ENCODE measurements at regions of chr3 and their contacts with region 1.

Region 1: DNA sequence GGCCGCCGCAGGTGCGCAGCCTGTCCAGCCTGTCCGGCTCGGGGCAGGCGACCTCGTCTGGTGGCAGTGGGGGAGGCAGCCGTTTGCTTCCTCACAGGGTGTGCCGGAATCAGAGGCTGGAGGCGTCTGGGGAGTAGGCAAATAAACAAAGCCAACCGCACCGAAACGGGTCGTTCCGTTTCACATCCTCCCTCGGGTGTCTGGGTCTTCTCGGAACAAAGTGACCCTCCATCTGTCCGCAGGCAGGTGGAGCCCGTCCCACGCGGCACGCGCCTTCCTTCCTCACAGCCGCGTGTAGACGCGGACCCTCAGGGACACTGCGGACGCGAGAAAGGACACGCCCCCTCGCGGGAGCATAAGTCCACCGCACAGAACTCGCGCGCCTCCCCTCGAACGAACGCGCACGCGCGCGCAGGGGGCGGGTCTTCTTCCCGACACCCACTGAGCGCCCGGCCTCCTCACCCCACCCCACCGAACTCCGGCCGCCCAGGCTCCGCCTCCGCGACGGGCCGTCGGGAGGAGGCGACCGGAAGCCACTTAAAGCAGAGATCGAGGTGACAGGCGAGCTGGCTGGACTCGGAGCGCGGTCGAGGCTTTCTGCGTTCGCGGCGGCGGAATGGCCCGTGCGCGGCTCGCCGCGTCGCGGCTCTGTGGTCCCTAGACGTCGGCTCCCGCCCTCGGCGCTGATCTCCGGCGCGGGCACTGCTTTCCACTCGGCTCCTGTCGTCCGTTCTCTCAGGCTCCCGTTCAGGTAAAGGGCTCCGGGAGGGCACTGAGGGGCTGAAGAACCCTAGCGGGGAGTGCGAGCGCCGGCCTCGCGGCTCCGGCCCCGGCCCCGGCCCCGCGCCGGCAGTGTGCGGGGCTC is at the start of gene TIPARP:
- DNase-seq: peak; percentile 97
- H3K4me3 Mint-ChIP-seq: peak within 1 kb of the TSS; percentile 93
- H3K27ac Mint-ChIP-seq: peak within 1 kb of the TSS; percentile 88
- H3K4me1 Mint-ChIP-seq: peaks cover 40% of the 10 kb centered on the region
- H3K27me3 Mint-ChIP-seq: no peaks in the 10 kb centered on the region
- total RNA-seq, gene TIPARP: 15.7 to 17.1 TPM

Region 2: DNA sequence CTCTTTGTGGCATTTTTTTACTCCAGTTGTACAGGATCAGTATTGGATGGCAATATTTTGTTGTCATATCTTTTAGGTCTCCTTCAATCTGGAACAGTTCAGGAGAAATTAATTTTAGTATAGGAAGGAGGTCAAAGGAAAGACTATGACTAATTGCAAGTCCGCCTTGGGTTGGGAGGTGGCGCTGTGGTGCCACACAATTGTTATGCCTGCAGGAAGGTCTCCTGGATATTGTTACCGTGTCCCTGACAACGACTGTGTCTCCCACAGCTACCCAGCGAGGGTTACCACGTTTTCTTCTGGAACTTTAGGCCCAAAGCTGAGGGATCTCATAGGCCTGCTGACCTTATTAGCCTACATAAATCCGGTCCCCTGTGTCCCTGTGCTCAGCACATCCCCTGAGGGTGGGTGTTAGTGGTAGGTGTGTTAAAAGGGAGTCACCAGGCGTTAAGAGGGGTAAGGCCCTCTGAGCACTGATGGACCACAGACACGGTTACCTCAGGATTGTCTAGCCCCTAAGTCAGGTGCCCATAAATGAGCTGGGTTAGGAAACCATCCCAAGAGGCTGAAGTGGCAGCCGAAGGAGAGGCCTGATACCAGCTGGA is 522.4 kb before region 1 on chr3:
- CTCF ChIA-PET with region 1: no interaction called
- intact Hi-C with region 1: loop called (anchors 2 kb)
- DNase-seq: peak; percentile 77
- H3K4me3 Mint-ChIP-seq: no peak overlapping the region
- H3K27ac Mint-ChIP-seq: no peak overlapping the region
- H3K4me1 Mint-ChIP-seq: peaks cover 3% of the 10 kb centered on the region
- H3K27me3 Mint-ChIP-seq: no peaks in the 10 kb centered on the region

Region 3: DNA sequence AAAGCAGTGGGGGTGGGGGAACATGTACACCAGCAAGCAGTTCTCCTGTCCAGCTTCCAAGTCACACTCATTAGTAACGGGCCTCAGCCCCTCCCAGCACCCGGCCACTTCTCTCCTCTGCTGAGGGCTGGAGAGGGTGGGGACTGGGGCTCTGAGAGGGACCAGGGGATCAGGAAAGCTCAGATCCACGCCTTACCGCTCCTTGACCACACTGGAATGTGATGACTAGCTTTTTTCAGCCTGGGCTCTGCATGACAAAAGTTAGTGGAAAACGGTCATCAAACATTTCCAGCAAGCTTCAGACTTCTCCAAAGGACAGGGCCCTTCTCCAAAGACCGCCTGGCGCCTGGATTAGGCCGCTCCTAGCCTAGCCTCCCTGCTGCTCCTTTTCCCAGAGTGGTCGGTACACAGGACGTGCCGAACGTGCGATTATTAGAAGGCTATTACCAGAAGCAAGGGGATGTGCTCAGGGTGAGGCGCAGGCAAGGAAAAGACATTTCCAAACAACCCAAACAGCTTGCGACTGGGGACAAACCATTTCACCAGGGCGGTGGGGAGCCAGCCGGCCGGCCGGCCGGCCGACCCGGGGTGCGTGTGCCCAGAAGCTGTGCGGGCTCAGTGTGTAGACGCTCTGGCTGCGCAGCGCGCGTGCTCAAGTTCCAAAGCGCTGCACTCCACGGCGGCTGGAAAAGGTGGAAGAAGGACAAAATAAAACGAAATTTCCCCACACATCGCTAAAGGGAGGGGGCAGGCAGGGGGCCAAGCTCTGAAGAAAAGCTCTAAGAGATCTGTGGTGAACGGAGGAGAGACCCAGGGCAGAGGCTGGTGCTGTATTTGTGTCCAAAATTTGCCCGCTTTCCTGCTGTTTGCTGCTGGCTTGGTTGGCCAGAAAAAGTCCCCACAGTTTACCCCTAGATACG is 68.3 kb before region 1 on chr3:
- CTCF ChIA-PET with region 1: no interaction called
- intact Hi-C with region 1: loop called (anchors 1 kb)
- DNase-seq: no peak
- H3K4me3 Mint-ChIP-seq: peak overlapping the region; percentile 68
- H3K27ac Mint-ChIP-seq: no peak overlapping the region
- H3K4me1 Mint-ChIP-seq: peaks cover 19% of the 10 kb centered on the region
- H3K27me3 Mint-ChIP-seq: peaks cover 31% of the 10 kb centered on the region

Region 4: DNA sequence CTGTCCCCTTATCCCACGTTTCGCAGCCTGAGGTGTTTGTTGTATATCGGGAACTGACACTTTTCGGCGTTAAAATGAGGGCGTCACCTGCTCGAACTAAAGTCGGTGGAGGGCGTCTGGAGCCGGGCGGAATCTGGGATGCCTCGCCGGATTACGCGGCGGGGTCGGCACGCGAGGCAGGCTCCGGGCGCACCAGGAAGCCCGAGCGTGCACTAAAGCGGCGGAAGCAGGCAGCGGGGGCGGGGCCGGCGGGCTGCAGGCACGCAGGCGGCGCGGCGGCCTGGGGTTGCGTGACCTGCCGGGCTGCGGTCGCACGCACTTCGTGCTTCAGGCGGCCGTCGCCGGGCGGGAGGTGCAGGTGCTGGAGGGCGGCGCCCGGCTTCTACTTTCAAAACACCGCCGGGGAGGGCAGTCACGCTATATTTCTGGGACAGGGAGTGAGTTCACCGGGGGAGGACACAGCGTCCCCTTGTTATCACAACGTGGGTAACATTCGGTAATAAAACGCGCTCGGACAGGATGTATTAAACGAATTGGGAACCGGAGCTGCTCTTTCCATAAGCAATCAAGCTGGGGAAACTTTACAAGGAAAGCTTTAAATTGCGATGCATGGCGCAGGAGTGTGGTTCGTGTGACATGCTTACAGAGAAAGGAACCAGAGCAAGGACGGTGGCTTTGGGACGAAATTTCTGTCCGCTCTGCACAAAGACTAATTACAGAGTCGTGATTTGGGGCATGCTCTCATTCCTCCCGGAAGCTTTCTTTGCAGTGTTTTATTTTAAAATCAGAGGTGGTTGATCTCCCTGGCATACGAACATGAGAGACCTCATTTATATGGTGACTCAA is 142.7 kb after region 1 on chr3:
- CTCF ChIA-PET with region 1: interaction called, 4 read pairs
- intact Hi-C with region 1: loop called (anchors 1 kb)
- DNase-seq: peak; percentile 90
- H3K4me3 Mint-ChIP-seq: peak overlapping the region; percentile 90
- H3K27ac Mint-ChIP-seq: peak overlapping the region; percentile 88
- H3K4me1 Mint-ChIP-seq: peaks cover 22% of the 10 kb centered on the region
- H3K27me3 Mint-ChIP-seq: no peaks in the 10 kb centered on the region

Region 5: GRCh38 chr3:157045238-157045850 is 371.1 kb after region 1 on chr3:
- CTCF ChIA-PET with region 1: no interaction called
- intact Hi-C with region 1: no loop called
- DNase-seq: no peak
- H3K4me3 Mint-ChIP-seq: no peak overlapping the region
- H3K27ac Mint-ChIP-seq: no peak overlapping the region
- H3K4me1 Mint-ChIP-seq: no peaks in the 10 kb centered on the region
- H3K27me3 Mint-ChIP-seq: peaks cover 6% of the 10 kb centered on the region

Region 6: DNA sequence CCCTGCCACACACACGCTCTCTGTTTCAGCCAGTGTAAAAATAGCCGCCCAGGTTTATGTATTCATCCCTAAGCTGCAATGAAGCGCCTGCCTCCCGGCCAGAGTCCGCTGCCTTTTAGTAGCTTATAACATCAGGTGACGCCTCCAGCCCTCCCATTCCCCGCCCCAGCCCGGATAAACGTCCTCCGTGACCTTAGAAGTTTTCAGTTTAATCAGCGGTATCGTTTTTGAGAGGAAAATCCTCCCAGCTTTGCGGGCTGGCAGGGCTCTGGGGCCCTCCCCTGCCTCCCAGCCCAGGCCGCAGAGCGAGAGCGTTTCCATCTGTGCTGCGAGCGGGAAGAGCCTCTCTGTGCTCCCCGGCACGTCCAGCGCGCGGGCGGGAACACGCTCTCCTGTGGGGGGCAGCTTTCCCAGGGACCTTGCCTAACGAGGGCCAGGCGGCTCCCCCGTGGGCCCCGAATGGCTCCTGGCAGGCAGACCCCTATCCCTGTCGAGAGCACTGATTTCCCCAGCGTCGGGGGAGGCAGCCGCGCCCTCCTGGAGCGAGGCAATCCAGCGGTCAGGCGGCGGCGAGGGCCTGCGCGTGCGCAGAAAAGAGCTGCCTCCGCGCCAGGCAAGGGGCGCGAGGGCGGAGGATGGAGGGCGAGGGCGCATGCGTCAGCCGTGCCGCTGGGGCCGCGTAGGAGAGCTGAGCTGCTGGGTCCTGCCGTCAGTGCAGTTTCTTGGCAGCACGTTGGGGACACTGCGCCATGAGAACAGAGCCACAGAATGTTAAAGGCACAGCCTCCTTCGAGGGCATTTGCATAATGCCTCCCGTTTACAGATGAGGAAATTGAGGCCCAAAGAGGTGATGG is 414.6 kb after region 1 on chr3:
- CTCF ChIA-PET with region 1: interaction called, 4 read pairs
- intact Hi-C with region 1: loop called (anchors 1 kb)
- DNase-seq: peak; percentile 94
- H3K4me3 Mint-ChIP-seq: peak overlapping the region; percentile 73
- H3K27ac Mint-ChIP-seq: peak overlapping the region; percentile 96
- H3K4me1 Mint-ChIP-seq: peaks cover 51% of the 10 kb centered on the region
- H3K27me3 Mint-ChIP-seq: peaks cover 4% of the 10 kb centered on the region

Region 7: DNA sequence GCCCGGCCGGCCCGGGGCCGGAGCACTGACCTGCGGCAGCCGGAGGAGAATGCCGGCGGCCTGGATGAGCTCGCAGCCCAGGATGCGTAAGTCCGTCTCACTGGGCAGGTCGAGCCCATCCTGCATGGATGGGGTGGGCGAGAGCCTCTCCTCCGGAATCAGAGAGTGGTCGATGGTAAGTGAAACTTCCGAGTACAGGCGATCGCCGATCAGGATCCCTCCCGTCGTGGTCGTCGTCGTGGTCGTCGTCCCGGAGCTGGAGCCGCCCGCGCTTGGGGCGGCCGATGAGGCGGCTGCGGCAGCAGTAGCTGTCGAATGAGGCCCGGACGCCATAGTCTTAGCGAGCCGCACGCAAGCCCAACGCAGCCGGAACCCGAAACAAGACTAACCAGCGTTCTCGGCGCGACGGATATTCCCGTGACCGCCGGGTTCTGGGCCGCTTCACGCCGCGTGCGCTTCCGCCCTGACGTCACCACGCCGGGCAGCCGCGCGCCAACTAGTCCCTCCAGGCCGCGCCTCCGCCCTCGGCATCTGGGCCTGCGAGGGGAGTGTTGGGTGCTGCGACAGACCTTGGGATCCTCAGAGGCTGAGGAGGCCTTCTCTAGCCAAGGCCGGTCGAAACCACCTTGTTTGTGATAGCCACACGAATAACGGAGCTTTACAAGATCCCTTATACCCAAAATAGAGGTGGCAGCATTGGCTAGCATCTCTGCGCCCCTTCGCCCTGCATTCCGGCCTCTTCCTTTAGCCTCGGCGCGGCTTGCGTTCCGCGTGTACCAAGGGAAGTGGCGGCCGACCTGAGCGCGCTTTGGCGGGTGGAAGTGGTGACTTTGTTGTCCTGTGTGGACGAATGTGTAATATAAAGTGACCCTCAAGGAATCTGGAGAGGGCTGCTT is 485.7 kb after region 1 on chr3 and contains the start of gene CCNL1:
- CTCF ChIA-PET with region 1: no interaction called
- intact Hi-C with region 1: loop called (anchors 1 kb)
- DNase-seq: peak; percentile 94
- H3K4me3 Mint-ChIP-seq: peak within 1 kb of the TSS; percentile 93
- H3K27ac Mint-ChIP-seq: peak within 1 kb of the TSS; percentile 99
- H3K4me1 Mint-ChIP-seq: peaks cover 43% of the 10 kb centered on the region
- H3K27me3 Mint-ChIP-seq: no peaks in the 10 kb centered on the region
- total RNA-seq, gene CCNL1: 206 to 214 TPM

Measured in activated naive CD4-positive, alpha-beta T cell treated with anti-CD3 and anti-CD28 coated beads for 36 hours (primary cell).